GM12878 (cell line): ENCODE measurements at regions of chr5 and their contacts with region 1.

Region 1: DNA sequence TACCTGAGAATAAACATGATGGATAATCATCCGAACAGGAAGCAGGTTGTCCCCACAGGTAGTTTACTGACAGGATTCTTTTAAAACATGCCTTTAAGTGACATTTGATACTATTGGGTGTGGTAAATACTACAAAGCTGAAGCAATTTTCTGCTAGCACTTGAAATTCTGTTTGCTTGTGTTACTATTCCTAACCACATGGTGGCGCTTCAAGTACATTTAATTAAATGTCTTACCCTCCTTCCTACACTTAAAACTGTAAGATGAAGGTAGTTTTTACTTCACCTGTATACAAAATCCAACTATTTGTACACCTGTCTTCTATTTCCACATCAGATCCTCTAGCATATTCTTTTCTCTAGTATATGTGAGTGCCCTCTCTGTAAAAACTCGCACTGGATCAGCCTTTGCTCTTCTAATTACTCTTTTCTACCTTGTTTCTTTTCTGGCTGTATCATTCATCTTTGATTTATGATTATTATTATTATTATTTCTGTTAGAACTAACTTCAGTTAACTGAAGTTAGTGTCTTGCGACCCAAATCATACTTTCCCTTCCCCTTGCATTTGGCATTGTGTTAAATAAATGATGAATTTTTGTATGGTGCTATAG is 18.4 kb downstream of the SLC25A46 start:
- DNase-seq: no peak
- ATAC-seq: peak; percentile 10; the same call in 1 of the 3 replicates
- H3K4me3 ChIP-seq: no peak overlapping the region
- H3K27ac ChIP-seq: no peak overlapping the region
- H3K4me1 ChIP-seq: peaks cover 17% of the 10 kb centered on the region; the same call in 1 of the 2 replicates
- H3K27me3 ChIP-seq: no peaks in the 10 kb centered on the region
- CTCF ChIP-seq: peak; percentile 60 to 64 (median 60)
- EP300 ChIP-seq: no peak
- POLR2A ChIP-seq: no peak
- RAD21 ChIP-seq: peak; percentile 76

Region 2: DNA sequence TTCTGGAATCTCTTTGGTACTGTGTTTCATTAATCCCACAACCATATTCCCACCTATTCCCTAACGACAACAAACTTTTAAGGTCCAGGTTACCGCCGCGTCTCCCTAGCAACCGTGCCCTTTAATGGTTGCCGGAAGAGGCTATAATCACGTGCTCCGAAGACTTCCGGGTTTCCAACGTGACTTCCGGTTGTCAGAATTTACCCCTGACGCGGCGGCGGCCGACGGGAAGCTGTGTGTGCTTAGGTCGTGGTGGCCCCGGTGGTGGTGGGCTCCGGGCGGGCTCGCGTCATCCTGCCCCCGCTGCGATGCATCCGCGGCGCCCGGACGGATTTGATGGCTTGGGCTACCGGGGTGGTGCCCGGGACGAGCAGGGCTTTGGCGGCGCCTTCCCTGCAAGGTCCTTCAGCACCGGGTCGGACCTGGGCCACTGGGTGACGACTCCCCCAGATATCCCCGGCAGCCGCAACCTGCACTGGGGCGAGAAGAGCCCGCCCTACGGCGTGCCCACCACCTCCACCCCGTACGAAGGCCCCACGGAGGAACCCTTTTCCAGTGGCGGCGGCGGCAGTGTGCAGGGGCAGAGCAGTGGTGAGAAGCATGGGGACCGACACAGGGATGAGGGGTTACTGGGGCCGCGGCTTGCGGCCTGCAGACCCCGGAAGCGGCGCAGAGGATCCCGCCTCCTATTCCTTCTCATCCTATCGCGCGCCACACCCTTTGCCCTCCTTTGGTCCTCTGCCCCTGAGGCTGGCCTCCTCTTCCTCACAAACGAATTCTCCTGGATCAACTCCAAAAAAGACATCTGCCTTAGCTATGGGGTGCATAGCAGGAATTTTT is 18.2 kb before region 1 on chr5 and contains the start of gene SLC25A46:
- CTCF ChIA-PET with region 1: interaction called, 33 read pairs
- POLR2A ChIA-PET with region 1: interaction called, 45 read pairs
- RAD21 ChIA-PET with region 1: interaction called, 30 read pairs
- SMC1A ChIA-PET with region 1: interaction called, 67 read pairs
- in situ Hi-C with region 1: no loop called
- intact Hi-C with region 1: loop called (anchors 1 kb)
- DNase-seq: peak; percentile 56
- ATAC-seq: peak; percentile 91
- H3K4me3 ChIP-seq: peak within 1 kb of the TSS; percentile 75
- H3K27ac ChIP-seq: peak within 1 kb of the TSS; percentile 90
- H3K4me1 ChIP-seq: 0 out of 2 replicates have a peak, but pooled peaks cover 3% of the 10 kb centered on the region
- H3K27me3 ChIP-seq: no peaks in the 10 kb centered on the region
- CTCF ChIP-seq: no peak
- EP300 ChIP-seq: no peak
- POLR2A ChIP-seq: peak; percentile 99
- RAD21 ChIP-seq: no peak
- polyA plus RNA-seq, gene SLC25A46: 18.0 to 31.0 TPM

Region 3: DNA sequence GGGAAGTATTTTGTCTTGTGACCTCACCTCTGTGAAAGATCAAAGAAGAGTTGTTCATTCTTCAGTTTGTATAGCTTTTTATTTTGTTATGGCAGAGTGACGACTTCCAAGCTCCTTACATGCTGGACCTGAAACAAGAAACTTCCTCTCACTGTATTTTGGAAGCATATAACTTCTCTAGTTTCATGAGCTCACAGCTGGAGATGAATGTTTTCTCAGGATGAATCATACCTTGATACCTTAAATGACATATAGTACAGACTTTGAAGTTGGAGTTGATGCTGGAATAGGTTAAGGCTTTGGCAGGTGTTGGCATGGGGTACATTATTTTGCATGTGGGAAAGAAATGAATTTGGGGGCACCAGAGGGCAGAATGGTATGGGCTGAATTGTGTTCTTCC is 94.1 kb after region 1 on chr5:
- CTCF ChIA-PET with region 1: no interaction called
- POLR2A ChIA-PET with region 1: no interaction called
- RAD21 ChIA-PET with region 1: no interaction called
- SMC1A ChIA-PET with region 1: no interaction called
- in situ Hi-C with region 1: no loop called
- intact Hi-C with region 1: no loop called
- DNase-seq: no peak
- ATAC-seq: no peak
- H3K4me3 ChIP-seq: no peak overlapping the region
- H3K27ac ChIP-seq: no peak overlapping the region
- H3K4me1 ChIP-seq: peaks cover 4% of the 10 kb centered on the region; the same call in 1 of the 2 replicates
- H3K27me3 ChIP-seq: no peaks in the 10 kb centered on the region
- CTCF ChIP-seq: no peak
- EP300 ChIP-seq: no peak
- POLR2A ChIP-seq: no peak
- RAD21 ChIP-seq: no peak

Region 4: GRCh38 chr5:110865400-110866094 is 108.3 kb after region 1 on chr5:
- CTCF ChIA-PET with region 1: interaction called, 6 read pairs
- POLR2A ChIA-PET with region 1: no interaction called
- RAD21 ChIA-PET with region 1: interaction called, 4 read pairs
- SMC1A ChIA-PET with region 1: interaction called, 13 read pairs
- in situ Hi-C with region 1: no loop called
- intact Hi-C with region 1: loop called (anchors 1 kb)
- DNase-seq: no peak
- ATAC-seq: peak; percentile 80
- H3K4me3 ChIP-seq: no peak overlapping the region
- H3K27ac ChIP-seq: no peak overlapping the region
- H3K4me1 ChIP-seq: no peaks in the 10 kb centered on the region
- H3K27me3 ChIP-seq: no peaks in the 10 kb centered on the region
- CTCF ChIP-seq: peak; percentile 49 to 64 (median 53)
- EP300 ChIP-seq: no peak
- POLR2A ChIP-seq: no peak
- RAD21 ChIP-seq: peak; percentile 56

Region 5: DNA sequence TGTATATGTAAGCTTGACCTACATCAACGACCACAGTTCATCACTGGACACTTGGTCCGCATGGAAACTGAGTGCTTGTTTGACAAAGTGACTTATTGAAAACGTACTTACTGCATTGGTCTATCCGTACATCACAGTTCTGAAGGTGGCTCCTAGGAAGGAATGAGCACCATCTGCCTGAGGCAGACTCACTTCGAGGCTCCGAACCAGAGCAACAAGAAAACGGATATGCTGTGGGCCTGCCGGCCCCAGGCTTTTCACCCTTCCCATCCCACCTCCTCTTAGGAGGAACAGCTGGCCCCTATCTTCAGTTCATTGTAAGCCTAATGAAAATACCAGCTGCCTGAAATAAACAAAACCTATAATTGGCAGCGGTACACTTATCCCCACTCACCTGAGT is 247.1 kb after region 1 on chr5:
- CTCF ChIA-PET with region 1: no interaction called
- POLR2A ChIA-PET with region 1: no interaction called
- RAD21 ChIA-PET with region 1: no interaction called
- SMC1A ChIA-PET with region 1: no interaction called
- in situ Hi-C with region 1: no loop called
- intact Hi-C with region 1: no loop called
- DNase-seq: no peak
- ATAC-seq: no peak
- H3K4me3 ChIP-seq: no peak overlapping the region
- H3K27ac ChIP-seq: no peak overlapping the region
- H3K4me1 ChIP-seq: no peaks in the 10 kb centered on the region
- H3K27me3 ChIP-seq: no peaks in the 10 kb centered on the region; a peak in 1 of 4 replicates
- CTCF ChIP-seq: no peak
- EP300 ChIP-seq: no peak
- POLR2A ChIP-seq: no peak
- RAD21 ChIP-seq: no peak

Region 6: DNA sequence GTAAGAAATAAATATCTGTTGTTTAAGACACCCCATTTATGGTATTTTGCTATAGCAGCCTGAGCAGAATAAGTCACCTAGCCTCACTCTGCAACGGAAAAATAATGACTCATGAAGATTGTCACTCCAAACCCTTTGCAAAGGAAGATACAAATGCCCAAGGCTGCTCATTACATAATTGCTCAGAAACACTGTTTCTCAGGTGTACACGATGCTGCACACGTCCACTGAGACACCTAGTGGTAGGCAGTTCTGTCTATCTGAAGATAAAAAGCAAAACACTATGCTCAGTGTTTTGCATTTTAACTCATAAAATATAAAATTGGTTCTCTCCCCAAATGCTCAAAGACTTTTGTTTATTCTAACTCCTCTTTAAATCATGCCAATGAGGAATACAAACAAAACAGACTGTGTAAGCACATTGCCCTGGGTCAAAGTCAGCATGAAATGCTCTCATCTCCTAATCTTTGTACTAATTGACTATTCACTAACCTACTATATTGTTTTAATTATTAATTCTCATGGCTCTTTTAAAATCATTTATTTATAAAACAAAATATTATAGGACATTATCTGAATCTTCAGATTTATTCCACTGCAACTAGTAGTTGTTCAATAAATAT is 306.6 kb after region 1 on chr5:
- CTCF ChIA-PET with region 1: interaction called, 10 read pairs
- POLR2A ChIA-PET with region 1: no interaction called
- RAD21 ChIA-PET with region 1: interaction called, 5 read pairs
- SMC1A ChIA-PET with region 1: interaction called, 5 read pairs
- in situ Hi-C with region 1: loop called (anchors 10 kb)
- intact Hi-C with region 1: loop called (anchors 1 kb)
- DNase-seq: no peak
- ATAC-seq: peak; percentile 83
- H3K4me3 ChIP-seq: no peak overlapping the region
- H3K27ac ChIP-seq: no peak overlapping the region
- H3K4me1 ChIP-seq: no peaks in the 10 kb centered on the region
- H3K27me3 ChIP-seq: peaks cover 2 to 3% of the 10 kb centered on the region in 2 experiments; a peak in 3 of 4 replicates
- CTCF ChIP-seq: peak; percentile 52 to 53 (median 53)
- EP300 ChIP-seq: no peak
- POLR2A ChIP-seq: no peak
- RAD21 ChIP-seq: peak; percentile 61

Region 7: GRCh38 chr5:111092062-111092853 is 335.0 kb after region 1 on chr5 and contains the start of gene WDR36:
- CTCF ChIA-PET with region 1: interaction called, 5 read pairs
- POLR2A ChIA-PET with region 1: no interaction called
- RAD21 ChIA-PET with region 1: no interaction called
- SMC1A ChIA-PET with region 1: interaction called, 5 read pairs
- in situ Hi-C with region 1: loop called (anchors 10 kb)
- intact Hi-C with region 1: loop called (anchors 2 kb)
- DNase-seq: peak; percentile 79
- ATAC-seq: peak; percentile 91
- H3K4me3 ChIP-seq: peak within 1 kb of the TSS; percentile 99
- H3K27ac ChIP-seq: peak within 1 kb of the TSS; percentile 62
- H3K4me1 ChIP-seq: no peaks in the 10 kb centered on the region; the same call in 1 of the 2 replicates
- H3K27me3 ChIP-seq: no peaks in the 10 kb centered on the region
- CTCF ChIP-seq: no peak
- EP300 ChIP-seq: no peak
- POLR2A ChIP-seq: peak; percentile 95
- RAD21 ChIP-seq: peak; percentile 23; the same call in 1 of the 2 replicates
- polyA plus RNA-seq, gene WDR36: 13.3 to 22.5 TPM